GM18951 (cell line): ENCODE measurements at regions of chr2 and their contacts with region 1.

Region 1: GRCh38 chr2:65576861-65577601 is 144.6 kb upstream of the SPRED2 start:
- POLR2A ChIP-seq: no peak

Region 2: GRCh38 chr2:65064728-65065552 is 512.1 kb before region 1 on chr2:
- in situ Hi-C with region 1: loop called (anchors 10 kb)
- POLR2A ChIP-seq: no peak